ENCODE measurements at regions of chr3 and their contacts with region 1.

Region 1: DNA sequence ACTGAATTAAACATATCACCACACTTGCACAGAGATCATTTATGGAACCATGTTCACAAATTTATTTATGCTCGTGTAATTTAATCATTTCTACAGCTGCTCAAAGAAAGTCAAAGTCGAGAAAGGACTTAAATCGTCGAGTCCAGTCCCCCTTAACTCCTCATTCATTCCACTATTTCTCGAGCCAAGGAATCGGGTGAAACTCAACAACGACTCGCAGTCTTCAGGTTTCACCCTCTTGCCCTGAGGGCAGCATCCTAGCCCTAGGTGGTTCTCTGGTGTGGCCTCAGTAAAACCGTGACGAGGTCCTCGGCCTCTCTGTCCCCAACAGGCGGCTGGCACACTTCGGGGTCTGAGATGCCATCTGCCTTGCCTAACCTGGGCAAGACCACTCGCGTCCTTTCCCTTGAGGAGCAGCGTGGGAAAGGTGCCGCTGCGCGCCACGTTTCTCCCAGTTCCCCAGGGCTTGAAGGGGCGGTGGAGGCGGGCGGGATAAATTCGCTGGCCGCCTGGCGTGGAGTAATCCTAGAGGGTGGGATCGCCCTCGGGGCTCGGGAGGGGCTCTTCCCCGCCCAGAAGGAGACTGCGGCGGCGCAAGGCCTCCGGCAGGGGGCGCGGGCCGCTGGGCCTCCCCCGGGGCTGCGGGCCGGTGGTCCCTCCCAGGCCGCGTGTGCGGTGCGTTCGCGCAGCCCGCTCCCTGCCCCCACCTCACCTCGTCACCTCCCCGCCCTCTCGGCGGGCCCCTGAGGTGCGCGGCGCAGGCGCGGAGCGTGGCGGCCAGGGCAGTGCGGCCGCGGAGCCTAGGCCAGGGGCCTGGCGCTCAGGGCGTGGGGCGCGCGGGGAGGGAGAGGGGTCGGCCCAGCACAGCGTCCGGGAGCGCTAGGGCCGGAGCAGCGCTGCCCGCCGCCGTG is at the start of gene ZNF639:
- DNase-seq: peak; percentile 75
- H3K4me3 Mint-ChIP-seq: peak within 1 kb of the TSS; percentile 93
- H3K27ac Mint-ChIP-seq: peak within 1 kb of the TSS; percentile 97
- H3K4me1 Mint-ChIP-seq: peaks cover 25% of the 10 kb centered on the region
- H3K27me3 Mint-ChIP-seq: peaks cover 11% of the 10 kb centered on the region
- total RNA-seq, gene ZNF639: 34.3 and 38.7 TPM in 2 replicates

Region 2: DNA sequence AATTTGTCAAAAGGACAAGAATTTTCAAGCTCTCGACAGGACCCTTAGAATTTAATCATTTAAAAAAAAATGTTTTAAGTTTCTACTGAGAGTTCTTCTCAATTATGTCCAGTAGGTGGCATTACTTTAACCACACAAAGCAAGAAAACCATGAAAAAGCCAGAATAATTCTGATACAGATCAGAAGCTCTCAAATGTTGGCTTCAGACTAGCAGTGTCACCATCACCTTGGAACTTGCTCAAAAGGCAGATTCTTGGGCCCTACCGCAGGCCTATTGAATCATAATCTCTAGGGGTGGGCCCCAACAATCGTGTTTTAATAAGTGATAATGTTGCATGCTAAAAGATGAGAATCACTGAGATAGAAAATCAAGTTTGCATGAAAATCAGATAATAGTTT is 885.8 kb before region 1 on chr3:
- intact Hi-C with region 1: loop called (anchors 5 kb)
- DNase-seq: no peak
- H3K4me3 Mint-ChIP-seq: no peak overlapping the region
- H3K27ac Mint-ChIP-seq: no peak overlapping the region
- H3K4me1 Mint-ChIP-seq: no peaks in the 10 kb centered on the region
- H3K27me3 Mint-ChIP-seq: no peaks in the 10 kb centered on the region

Region 3: DNA sequence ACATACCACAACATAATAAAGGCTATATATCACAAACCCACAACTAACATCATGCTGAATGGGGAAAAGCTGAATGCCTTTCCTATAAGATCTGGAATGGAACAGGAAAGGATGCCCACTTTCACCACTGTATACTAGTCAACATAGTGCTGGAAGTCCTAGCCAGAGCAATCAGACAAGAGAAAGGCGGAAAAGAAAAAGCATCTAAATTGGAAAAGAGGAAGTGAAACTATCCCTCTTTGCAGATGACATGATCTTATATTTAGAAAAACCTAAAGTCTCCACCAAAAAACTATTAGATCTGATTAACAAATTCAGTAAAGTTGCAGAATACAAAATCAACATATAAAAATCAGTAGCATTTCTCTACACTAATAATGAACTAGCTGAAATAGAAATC is 189.0 kb before region 1 on chr3:
- intact Hi-C with region 1: no loop called
- DNase-seq: no peak
- H3K4me3 Mint-ChIP-seq: no peak overlapping the region
- H3K27ac Mint-ChIP-seq: no peak overlapping the region
- H3K4me1 Mint-ChIP-seq: no peaks in the 10 kb centered on the region
- H3K27me3 Mint-ChIP-seq: peaks cover 15% of the 10 kb centered on the region

Region 4: DNA sequence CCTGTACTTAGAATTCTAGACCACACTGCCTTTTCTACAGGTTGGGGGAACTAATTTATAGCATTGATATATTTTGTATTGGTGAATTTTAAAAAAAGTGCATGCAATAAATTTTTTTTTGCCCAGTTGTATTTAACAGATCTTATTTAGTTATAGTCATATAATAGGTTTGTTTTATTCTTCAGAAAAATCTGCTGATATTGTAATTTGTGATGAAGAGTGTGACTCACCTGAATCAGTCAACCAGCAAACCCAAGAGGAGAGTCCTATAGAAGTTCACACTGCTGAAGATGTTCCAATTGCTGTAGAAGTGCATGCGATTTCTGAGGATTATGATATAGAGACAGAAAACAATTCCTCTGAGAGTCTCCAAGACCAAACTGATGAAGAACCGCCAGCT is 10.5 kb after region 1 on chr3:
- intact Hi-C with region 1: loop called (anchors 1 kb)
- DNase-seq: no peak
- H3K4me3 Mint-ChIP-seq: no peak overlapping the region
- H3K27ac Mint-ChIP-seq: no peak overlapping the region
- H3K4me1 Mint-ChIP-seq: no peaks in the 10 kb centered on the region
- H3K27me3 Mint-ChIP-seq: no peaks in the 10 kb centered on the region

Region 5: DNA sequence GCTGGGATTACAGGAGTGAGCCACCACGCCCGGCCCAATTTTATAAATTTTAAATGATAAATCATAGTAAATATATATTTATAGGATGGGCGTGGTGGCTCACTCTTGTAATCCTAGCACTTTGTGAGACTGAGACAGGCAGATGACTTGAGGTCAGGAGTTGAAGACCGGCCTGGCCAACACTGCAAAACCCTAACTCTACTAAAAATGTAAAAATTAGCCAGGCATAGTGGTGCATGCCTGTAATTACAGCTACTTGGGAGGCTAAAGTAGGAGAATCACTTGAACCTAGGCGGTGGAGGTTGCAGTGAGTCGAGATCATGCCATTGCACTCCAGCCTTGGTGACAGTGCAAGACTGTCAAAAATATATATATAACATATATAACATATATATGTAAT is 51.4 kb after region 1 on chr3:
- intact Hi-C with region 1: no loop called
- DNase-seq: no peak
- H3K4me3 Mint-ChIP-seq: no peak overlapping the region
- H3K27ac Mint-ChIP-seq: no peak overlapping the region
- H3K4me1 Mint-ChIP-seq: no peaks in the 10 kb centered on the region
- H3K27me3 Mint-ChIP-seq: no peaks in the 10 kb centered on the region

Region 6: GRCh38 chr3:179451265-179452175 is 129.0 kb after region 1 on chr3 and contains the start of gene GNB4:
- intact Hi-C with region 1: loop called (anchors 10 kb)
- DNase-seq: peak; percentile 54
- H3K4me3 Mint-ChIP-seq: peak within 1 kb of the TSS; percentile 83
- H3K27ac Mint-ChIP-seq: peak within 1 kb of the TSS; percentile 85
- H3K4me1 Mint-ChIP-seq: peaks cover 25% of the 10 kb centered on the region
- H3K27me3 Mint-ChIP-seq: peaks cover 77% of the 10 kb centered on the region
- total RNA-seq, gene GNB4: 12.0 and 13.9 TPM in 2 replicates

Region 7: GRCh38 chr3:179604321-179605078 is 282.0 kb after region 1 on chr3 and contains the starts of genes MRPL47 and NDUFB5:
- intact Hi-C with region 1: loop called (anchors 1 kb)
- DNase-seq: peak; percentile 91
- H3K4me3 Mint-ChIP-seq: peak within 1 kb of the TSS; percentile 99
- H3K27ac Mint-ChIP-seq: peak within 1 kb of the TSS; percentile 99
- H3K4me1 Mint-ChIP-seq: peaks cover 31% of the 10 kb centered on the region
- H3K27me3 Mint-ChIP-seq: no peaks in the 10 kb centered on the region
- total RNA-seq, gene MRPL47: 61.2 and 64.4 TPM in 2 replicates
- total RNA-seq, gene NDUFB5: 90.3 and 91.6 TPM in 2 replicates

Region 8: GRCh38 chr3:180534828-180535227 is 1212.3 kb after region 1 on chr3:
- intact Hi-C with region 1: no loop called
- DNase-seq: no peak
- H3K4me3 Mint-ChIP-seq: no peak overlapping the region
- H3K27ac Mint-ChIP-seq: no peak overlapping the region
- H3K4me1 Mint-ChIP-seq: no peaks in the 10 kb centered on the region
- H3K27me3 Mint-ChIP-seq: no peaks in the 10 kb centered on the region

Measured in activated T-helper 2 cell treated with anti-CD3 and anti-CD28 coated beads, Interferon-gamma antibody, Interleukin-2, Interleukin-4, amounts not matched to agents 10 μg/mL and 5 μg/mL and 100 μg/mL, durations not matched to agents 14 hours and 24 hours and 36 hours (primary cell).